ENCODE measurements at regions of chr1 and their contacts with region 1.

Region 1: DNA sequence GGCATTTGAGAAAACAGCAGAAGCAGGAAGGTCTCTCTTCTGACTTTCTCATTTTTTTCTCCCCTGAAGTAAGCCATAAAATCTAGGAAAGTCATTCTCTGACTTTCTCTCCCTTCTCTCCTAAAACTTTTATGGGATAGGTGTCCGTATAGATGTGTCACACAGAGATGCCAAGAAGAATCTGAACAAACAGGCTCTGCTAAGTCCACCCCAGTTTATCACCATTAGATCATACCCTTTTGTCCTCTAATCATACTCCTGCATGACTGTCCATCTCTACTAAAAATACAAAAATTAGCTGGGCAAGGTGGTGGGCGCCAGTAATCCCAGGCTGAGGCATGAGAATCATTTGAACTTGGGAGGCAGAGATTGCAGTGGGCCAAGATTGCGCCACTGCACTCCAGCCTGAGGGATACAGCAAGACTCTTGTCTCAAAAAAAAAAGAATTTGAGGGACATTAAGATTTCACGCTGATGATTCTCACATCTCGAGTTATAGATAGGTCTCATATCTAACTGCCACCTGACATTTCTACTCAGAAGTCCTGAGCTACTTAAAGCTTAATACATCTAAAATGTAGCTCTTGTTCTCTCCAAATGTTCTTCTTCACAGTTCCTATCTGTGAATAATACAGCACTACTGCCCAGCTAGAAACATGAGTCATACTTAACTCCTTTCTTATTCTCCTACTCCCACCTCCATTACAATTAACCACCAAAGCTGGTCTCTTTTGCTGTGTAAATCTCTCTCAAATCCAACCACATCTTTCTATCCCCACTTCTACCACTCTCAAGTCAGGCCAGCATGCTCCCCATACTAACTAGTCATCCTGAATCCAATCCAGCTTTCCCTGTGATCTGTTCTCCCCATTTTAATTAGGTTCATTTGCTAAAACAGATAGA is 47.7 kb downstream of the ZNF644 start:
- DNase-seq: peak; percentile 54
- H3K4me3 ChIP-seq: no peak overlapping the region
- H3K27ac ChIP-seq: no peak overlapping the region
- H3K4me1 ChIP-seq: peaks cover 14% of the 10 kb centered on the region
- H3K27me3 ChIP-seq: no peaks in the 10 kb centered on the region
- CTCF ChIP-seq: no peak

Region 2: DNA sequence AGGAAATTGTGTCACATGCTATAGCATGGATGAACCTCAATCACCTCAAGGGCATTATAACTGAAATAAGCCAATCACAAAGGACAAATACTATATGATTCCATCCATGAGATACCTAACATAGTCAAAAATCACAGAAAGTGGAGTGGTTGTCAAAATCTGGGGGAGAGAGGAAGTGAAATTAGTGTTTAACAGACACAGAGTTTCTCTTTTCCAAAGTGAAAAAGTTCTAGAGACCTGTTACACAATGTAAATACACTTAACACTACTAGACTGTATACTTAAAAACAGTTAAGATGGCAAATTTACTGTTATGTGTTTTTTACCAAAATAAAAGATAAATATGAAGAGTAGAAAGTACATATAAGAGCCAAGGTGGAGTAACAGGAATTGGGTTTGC is 15.8 kb after region 1 on chr1:
- CTCF ChIA-PET with region 1: no interaction called
- dilution Hi-C with region 1: no loop called
- in situ Hi-C with region 1: no loop called
- intact Hi-C with region 1: no loop called
- DNase-seq: no peak
- H3K4me3 ChIP-seq: no peak overlapping the region
- H3K27ac ChIP-seq: no peak overlapping the region
- H3K4me1 ChIP-seq: peaks cover 8% of the 10 kb centered on the region
- H3K27me3 ChIP-seq: no peaks in the 10 kb centered on the region
- CTCF ChIP-seq: no peak

Region 3: GRCh38 chr1:91018006-91018405 is 43.9 kb after region 1 on chr1:
- CTCF ChIA-PET with region 1: interaction called, 3 read pairs
- dilution Hi-C with region 1: no loop called
- in situ Hi-C with region 1: no loop called
- intact Hi-C with region 1: loop called (anchors 5 kb)
- DNase-seq: no peak
- H3K4me3 ChIP-seq: no peak overlapping the region
- H3K27ac ChIP-seq: no peak overlapping the region
- H3K4me1 ChIP-seq: peaks cover 34% of the 10 kb centered on the region
- H3K27me3 ChIP-seq: no peaks in the 10 kb centered on the region
- CTCF ChIP-seq: peak; percentile 27 to 42